ENCODE measurements at regions of chr3 and their contacts with region 1.

Region 1: DNA sequence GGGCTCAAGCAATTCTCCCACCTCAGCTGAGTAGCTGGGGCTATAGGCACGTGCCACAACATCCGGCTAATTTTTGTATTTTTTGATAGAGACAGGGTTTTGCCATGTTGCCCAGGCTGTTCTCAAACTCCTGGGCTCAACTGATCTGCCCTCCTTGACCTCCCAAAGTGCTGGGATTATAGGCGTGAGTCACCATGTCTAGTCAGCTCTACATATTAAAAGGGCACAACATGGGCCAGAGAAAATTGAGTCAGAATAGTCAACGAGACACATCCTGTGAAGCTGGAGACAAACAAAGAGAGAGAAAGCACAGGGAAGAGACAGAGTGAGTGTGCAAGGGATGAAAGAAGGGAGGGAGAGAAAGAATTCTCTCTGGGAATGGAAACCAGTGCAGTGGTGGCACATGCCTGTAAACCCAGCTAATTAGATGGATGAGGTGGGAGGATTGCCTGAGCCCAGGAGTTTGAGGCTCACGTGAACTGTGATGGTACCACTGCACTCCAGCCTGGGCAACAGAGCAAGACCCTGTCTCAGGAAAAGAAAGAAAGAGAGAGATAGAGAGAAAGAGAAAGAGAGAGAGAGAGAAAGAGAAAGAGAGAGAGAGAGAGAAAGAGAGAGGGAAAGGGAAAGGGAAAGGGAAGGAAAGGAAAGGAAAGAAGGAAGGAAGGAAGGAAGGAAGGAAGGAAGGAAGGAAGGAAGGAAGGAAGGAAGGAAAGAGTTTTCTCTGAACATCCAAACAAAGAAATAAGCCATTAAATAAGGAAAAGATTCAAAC is 107.2 kb upstream of the SLC25A36 start:
- DNase-seq: no peak
- H3K4me3 ChIP-seq: no peak overlapping the region
- H3K27ac ChIP-seq: no peak overlapping the region
- H3K4me1 ChIP-seq: peaks cover 34% of the 10 kb centered on the region
- CTCF ChIP-seq: no peak

Region 2: DNA sequence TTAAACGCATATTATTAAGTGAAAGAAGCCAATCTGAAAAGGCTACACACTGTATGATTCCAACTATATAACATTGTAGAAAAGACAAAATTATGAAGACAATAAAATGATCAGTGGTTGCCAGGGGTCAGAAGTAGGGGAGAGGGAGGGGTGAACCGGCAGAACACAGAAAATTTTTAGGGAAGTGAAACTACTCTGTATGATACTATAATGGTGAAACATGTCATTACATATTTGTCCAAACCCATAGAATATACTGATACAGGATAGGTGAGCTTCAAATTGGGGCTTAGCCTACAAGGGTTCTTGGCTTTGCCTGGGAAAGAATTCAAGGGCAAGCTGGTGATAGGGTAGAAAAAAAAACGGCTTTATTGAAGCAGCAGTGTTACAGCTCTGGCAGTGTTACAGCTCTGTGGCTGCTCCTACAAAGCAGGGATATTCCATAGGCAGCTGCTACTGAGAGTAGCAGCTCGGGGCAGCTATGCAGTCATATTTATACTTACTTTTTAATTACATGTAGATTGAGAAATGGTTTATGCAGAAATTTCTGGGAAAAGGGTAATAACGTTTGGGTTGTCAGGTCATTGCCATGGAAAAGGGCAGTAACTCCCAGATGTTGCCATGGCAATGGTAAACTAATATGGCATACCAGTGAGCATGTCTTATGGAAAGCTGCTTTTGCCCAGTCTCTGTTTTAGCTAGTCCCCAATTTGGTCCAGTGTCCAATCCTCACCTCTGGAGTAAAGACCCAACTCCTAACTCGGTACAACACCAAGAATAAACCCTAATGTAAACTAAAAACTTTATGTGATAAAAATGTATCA is 17.9 kb before region 1 on chr3:
- CTCF ChIA-PET with region 1: interaction called, 3 read pairs
- POLR2A ChIA-PET with region 1: interaction called, 29 read pairs
- intact Hi-C with region 1: no loop called
- DNase-seq: peak; percentile 78
- H3K4me3 ChIP-seq: peak overlapping the region; percentile 2
- H3K27ac ChIP-seq: peak overlapping the region; percentile 39
- H3K4me1 ChIP-seq: peaks cover 24% of the 10 kb centered on the region
- CTCF ChIP-seq: no peak

Region 3: GRCh38 chr3:140822401-140823047 is 11.9 kb before region 1 on chr3:
- CTCF ChIA-PET with region 1: interaction called, 3 read pairs
- POLR2A ChIA-PET with region 1: interaction called, 29 read pairs
- intact Hi-C with region 1: no loop called
- DNase-seq: no peak
- H3K4me3 ChIP-seq: no peak overlapping the region
- H3K27ac ChIP-seq: no peak overlapping the region
- H3K4me1 ChIP-seq: peaks cover 20% of the 10 kb centered on the region
- CTCF ChIP-seq: no peak